WTC11 (cell line): ENCODE measurements at regions of chr1 and their contacts with region 1.

Region 1: DNA sequence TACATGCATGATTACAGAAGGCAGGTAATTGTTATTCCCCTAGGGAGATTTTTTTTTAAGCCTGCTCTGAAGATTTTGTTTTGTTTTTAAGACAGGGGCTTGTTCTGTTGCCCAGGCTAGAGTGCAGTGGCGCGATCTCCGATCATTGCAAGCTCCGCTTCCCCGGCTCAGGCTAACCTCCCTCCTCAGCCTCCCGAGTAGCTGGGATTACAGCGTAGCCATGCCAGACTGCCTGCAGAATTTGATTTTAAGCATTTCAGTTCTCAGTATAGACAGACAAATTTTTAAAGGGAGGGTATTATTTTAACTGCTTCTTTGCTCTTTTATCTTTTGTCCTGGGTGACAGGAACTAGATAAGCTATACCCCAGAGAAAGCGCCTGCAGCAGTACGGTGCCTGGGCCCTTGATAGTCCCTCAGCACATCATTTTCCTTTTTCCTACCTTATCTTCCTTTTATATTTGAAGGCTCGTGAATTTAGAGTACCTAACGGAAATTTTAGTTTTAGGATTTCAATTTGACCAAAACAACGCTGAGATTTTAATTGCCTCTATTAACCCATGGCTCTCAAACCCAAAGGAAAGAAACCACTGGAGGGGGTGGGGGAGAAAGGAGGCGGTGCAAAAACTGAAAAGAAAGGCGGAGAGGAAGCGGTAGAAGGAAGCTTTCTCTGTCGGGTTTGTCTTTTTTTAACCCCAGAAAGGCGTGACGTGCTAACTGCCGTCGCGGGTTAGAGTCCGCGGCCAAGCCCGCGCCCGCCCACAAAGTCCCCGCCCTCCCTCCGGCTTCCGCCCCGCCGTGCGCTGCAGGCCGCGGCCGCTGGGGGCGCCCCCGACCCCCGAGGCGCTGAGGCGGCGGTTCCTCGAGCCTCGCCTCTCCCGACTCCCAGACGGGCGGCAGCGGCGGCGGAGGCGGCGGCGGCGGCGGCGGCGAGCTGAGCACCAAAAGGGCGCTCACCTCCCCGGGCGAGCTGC is at the start of gene EEIG2:
- DNase-seq: peak; percentile 84
- ATAC-seq: peak; percentile 82
- H3K4me3 Mint-ChIP-seq: peak within 1 kb of the TSS; percentile 94
- H3K27ac Mint-ChIP-seq: peak within 1 kb of the TSS; percentile 94
- H3K4me1 Mint-ChIP-seq: peaks cover 46% of the 10 kb centered on the region
- H3K27me3 Mint-ChIP-seq: no peaks in the 10 kb centered on the region; the same call in 1 of the 2 replicates
- CTCF ChIP-seq: peak; percentile 76
- total RNA-seq, gene EEIG2: 43.1 to 65.7 TPM (median 45.0 TPM) in 3 replicates

Region 2: GRCh38 chr1:108478429-108479015 is 81.0 kb before region 1 on chr1:
- CTCF ChIA-PET with region 1: no interaction called
- POLR2A ChIA-PET with region 1: no interaction called
- DNase-seq: no peak
- ATAC-seq: no peak
- H3K4me3 Mint-ChIP-seq: no peak overlapping the region
- H3K27ac Mint-ChIP-seq: no peak overlapping the region
- H3K4me1 Mint-ChIP-seq: no peaks in the 10 kb centered on the region
- H3K27me3 Mint-ChIP-seq: peaks cover 9% of the 10 kb centered on the region
- CTCF ChIP-seq: no peak

Region 3: DNA sequence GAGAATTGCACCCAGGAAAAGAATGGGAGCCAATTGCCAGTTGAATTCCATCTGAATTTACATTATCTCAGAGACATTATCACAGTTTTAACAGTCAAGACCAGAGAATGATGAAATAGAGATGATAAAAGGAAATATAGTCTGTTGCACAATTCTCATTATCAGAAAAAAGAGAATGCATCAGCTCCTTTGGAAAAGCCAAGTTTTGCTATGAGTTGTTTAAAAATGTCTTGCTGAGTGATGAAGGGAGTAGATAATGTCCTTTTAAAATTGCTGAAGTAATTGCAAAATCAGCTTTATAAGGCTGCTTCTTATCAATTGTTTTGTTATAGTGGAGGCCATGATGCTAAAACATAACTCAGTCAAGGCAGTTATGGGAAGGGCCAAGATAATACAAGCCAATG is 37.5 kb before region 1 on chr1:
- CTCF ChIA-PET with region 1: interaction called, 11 read pairs
- POLR2A ChIA-PET with region 1: no interaction called
- DNase-seq: no peak
- ATAC-seq: no peak
- H3K4me3 Mint-ChIP-seq: no peak overlapping the region
- H3K27ac Mint-ChIP-seq: no peak overlapping the region
- H3K4me1 Mint-ChIP-seq: peaks cover 26% of the 10 kb centered on the region
- H3K27me3 Mint-ChIP-seq: no peaks in the 10 kb centered on the region; the same call in 1 of the 2 replicates
- CTCF ChIP-seq: no peak

Region 4: DNA sequence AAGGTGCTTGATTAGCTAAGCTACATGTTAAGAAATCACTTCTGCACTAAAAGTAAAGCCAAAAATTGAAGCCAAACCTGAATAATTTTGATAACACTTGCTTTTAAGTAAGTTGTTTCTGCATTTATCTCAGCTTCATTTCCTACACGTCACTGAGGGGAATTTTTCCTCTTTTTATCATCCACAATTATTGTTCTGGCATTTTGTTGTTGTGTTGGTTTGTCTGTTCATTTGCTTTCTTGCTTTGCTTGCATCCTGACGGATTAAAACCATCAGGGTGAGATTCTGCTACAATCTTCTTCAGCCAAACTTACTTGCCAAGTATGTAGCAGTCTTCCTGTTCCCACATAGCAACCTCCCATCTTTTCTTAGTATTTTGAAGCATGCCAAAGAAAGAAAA is 17.6 kb before region 1 on chr1:
- CTCF ChIA-PET with region 1: interaction called, 16 read pairs
- POLR2A ChIA-PET with region 1: interaction called, 5 read pairs
- DNase-seq: no peak
- ATAC-seq: no peak
- H3K4me3 Mint-ChIP-seq: no peak overlapping the region
- H3K27ac Mint-ChIP-seq: peak overlapping the region; percentile 85
- H3K4me1 Mint-ChIP-seq: peaks cover 71% of the 10 kb centered on the region
- H3K27me3 Mint-ChIP-seq: no peaks in the 10 kb centered on the region; the same call in none of the 2 replicates
- CTCF ChIP-seq: no peak

Region 5: DNA sequence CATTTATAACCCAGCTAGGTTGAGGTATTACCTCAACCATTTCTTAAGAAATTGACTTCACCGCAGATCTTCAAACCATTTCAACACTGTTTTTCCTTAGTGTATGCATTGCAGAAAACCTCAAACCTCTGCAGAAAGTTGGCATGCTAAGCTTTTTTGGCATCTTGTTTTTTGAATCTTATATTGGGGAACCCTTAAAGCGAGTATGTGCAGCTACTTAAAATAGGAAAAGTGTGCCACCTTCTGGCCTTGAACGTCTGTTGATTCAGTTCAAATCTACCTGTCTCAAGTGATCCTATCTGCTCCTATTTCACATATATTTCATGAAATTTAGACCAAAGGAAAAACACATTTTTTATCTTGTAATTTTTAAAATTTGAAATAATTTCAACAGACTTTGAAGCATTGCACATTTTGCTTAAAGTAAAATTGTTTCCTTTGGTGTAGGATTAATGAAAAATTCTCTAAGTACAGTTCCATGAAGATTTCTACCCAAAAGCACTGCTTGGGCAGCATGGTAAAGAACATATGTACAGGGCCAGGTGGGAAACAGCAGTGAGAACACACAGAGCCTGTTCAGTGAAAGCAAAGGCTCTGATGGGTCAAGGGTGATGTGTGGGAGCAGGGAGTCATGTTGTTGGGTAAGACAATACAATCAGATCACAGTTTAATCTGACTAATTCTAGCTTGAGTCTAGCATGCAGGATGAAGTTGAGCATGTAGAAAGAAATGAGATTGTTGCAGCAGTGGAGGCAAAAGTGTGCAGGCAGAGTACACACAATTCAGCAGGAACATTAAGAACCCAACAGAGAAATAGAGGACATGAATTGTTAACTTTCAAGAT is 84.2 kb after region 1 on chr1:
- CTCF ChIA-PET with region 1: interaction called, 14 read pairs
- POLR2A ChIA-PET with region 1: no interaction called
- DNase-seq: no peak
- ATAC-seq: peak; percentile 50
- H3K4me3 Mint-ChIP-seq: no peak overlapping the region
- H3K27ac Mint-ChIP-seq: no peak overlapping the region
- H3K4me1 Mint-ChIP-seq: peaks cover 11% of the 10 kb centered on the region
- H3K27me3 Mint-ChIP-seq: no peaks in the 10 kb centered on the region
- CTCF ChIP-seq: no peak

Region 6: GRCh38 chr1:108877348-108878159 is 318.1 kb after region 1 on chr1:
- CTCF ChIA-PET with region 1: no interaction called
- POLR2A ChIA-PET with region 1: no interaction called
- DNase-seq: no peak
- ATAC-seq: no peak
- H3K4me3 Mint-ChIP-seq: peak overlapping the region; percentile 90
- H3K27ac Mint-ChIP-seq: peak overlapping the region; percentile 64; the same call in 1 of the 2 replicates
- H3K4me1 Mint-ChIP-seq: peaks cover 12% of the 10 kb centered on the region
- H3K27me3 Mint-ChIP-seq: peaks cover 8% of the 10 kb centered on the region
- CTCF ChIP-seq: no peak